Spleen (tissue), 13 donors: ENCODE measurements at regions of chr17 and their contacts with region 1.

Region 1: GRCh38 chr17:59435238-59435637 is 103.8 kb downstream of the YPEL2 start:
- DNase-seq: no peak
- H3K4me3 ChIP-seq: no peak overlapping the region
- H3K27ac ChIP-seq: peak overlapping the region in 4 of 8 donors; percentile 37 to 48 (median 44)
- H3K4me1 ChIP-seq: peaks cover 13 to 76% (median 40%) of the 10 kb centered on the region in 6 donors
- H3K27me3 ChIP-seq: no peaks in the 10 kb centered on the region
- CTCF ChIP-seq: no peak
- POLR2A ChIP-seq: no peak

Region 2: GRCh38 chr17:59372138-59372857 is 62.9 kb before region 1 on chr17:
- intact Hi-C with region 1: loop called (anchors 10 kb)
- DNase-seq: no peak
- H3K4me3 ChIP-seq: peak overlapping the region in 2 of 8 donors; percentile 0 to 26
- H3K27ac ChIP-seq: peak overlapping the region; percentile 66 to 84 (median 78)
- H3K4me1 ChIP-seq: peaks cover 59 to 100% (median 88%) of the 10 kb centered on the region in 6 donors
- H3K27me3 ChIP-seq: no peaks in the 10 kb centered on the region
- CTCF ChIP-seq: no peak
- POLR2A ChIP-seq: no peak

Region 3: GRCh38 chr17:59451706-59452105 is 16.5 kb after region 1 on chr17:
- intact Hi-C with region 1: no loop called
- DNase-seq: no peak
- H3K4me3 ChIP-seq: no peak overlapping the region
- H3K27ac ChIP-seq: no peak overlapping the region
- H3K4me1 ChIP-seq: peaks cover 0 to 7% (median 0%) of the 10 kb centered on the region in 6 donors
- H3K27me3 ChIP-seq: no peaks in the 10 kb centered on the region
- CTCF ChIP-seq: no peak
- POLR2A ChIP-seq: no peak